Transverse colon (tissue), 4 donors: ENCODE measurements at regions of chr6 and their contacts with region 1.

Region 1: DNA sequence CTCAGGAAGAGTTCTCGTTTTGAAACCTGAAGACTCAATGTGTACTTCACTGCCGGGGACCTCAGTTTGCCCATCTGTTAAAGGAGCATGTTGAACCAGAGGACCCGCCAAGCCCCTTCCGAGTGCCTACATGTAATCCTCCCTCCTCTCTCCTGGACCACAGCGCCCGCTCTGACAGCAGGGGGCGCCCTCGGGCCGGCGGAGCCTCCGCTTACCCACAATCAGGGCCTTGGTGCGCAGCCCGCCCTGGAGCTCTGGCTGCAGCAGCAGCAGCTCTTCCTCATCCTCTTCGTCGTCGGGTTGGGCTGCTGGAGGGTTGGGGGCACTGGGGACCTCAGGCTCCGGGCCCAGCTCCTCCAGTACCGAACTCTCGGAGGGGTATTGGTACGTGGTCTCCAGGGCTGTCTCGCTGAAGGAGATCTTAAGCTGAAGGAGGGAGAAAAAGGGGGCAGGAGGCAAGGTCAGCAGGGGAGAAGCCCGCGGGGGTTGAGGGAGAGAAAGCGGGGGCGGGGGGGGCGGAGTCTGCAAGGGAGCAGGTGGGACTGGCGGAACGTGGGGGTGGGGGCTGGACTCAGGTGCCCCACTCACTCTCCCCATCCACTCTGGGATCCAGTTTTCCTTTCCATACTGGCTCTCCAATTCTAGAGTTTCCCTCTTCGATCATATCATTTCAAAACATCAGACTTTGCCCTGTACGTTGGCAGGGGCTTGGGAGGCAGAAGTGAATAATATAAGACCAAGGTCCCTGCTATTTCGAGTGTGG is 6.3 kb upstream of the DHX16 start:
- DNase-seq: peak; percentile 91
- H3K4me3 ChIP-seq: peak overlapping the region in 1 of 4 donors; percentile 72
- H3K27ac ChIP-seq: peak overlapping the region; percentile 93 to 99 (median 96)
- H3K4me1 ChIP-seq: peaks cover 0 to 54% (median 32%) of the 10 kb centered on the region in 4 donors
- H3K27me3 ChIP-seq: no peaks in the 10 kb centered on the region
- CTCF ChIP-seq: peak; percentile 96 to 99 (median 96)
- EP300 ChIP-seq: no peak
- POLR2A ChIP-seq: no peak

Region 2: DNA sequence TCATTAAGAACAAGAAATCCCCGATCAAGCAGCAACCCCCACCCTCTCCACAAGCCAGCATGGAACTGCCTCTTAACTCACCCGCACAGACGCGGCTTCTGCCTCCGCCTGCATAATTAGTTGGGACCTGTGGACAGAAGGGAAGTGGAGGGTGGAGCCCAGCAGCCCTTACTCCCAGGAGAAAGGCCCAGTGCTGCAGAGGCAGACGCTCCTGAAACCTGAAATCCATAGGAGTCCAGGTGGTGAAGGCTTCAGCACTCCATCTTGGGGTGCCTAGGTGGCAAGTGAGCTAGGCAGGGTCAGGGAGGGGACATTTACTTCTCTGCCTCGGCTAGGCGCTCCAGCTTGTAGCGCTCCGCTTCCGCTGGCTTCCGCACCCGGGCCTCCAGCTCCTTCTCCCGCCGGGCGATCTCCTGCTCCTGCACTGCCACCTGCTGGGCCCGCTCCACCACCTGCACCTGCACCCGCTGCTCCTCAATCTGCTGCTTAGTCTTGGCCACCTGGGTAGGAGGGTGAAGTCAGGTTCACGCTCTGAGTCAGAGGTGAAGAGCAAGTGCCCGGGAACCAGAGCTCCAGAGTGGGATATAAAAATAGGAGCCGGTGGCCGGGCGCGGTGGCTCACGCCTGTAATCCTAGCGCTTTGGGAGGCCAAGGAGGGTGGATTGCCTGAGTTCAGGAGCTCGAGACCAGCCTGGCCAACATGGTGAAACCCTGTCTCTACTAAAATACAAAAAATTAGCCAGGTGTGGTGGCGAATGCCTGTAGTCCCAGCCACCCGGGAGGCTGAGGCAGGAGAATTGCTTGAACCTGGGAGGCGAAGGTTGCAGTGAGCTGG is 51.7 kb after region 1 on chr6:
- in situ Hi-C with region 1: loop called in 2 of 4 experiments (anchors 5 kb)
- intact Hi-C with region 1: no loop called
- DNase-seq: peak; percentile 92
- H3K4me3 ChIP-seq: peak overlapping the region in 1 of 4 donors; percentile 29
- H3K27ac ChIP-seq: peak overlapping the region; percentile 52 to 73 (median 71)
- H3K4me1 ChIP-seq: peaks cover 7 to 22% (median 9%) of the 10 kb centered on the region in 4 donors
- H3K27me3 ChIP-seq: no peaks in the 10 kb centered on the region
- CTCF ChIP-seq: peak; percentile 60 to 86 (median 69)
- EP300 ChIP-seq: no peak
- POLR2A ChIP-seq: no peak

Region 3: GRCh38 chr6:30814136-30815040 is 135.2 kb after region 1 on chr6:
- in situ Hi-C with region 1: no loop called
- intact Hi-C with region 1: loop called (anchors 5 kb)
- DNase-seq: peak; percentile 26
- H3K4me3 ChIP-seq: no peak overlapping the region
- H3K27ac ChIP-seq: peak overlapping the region; percentile 64 to 80 (median 76)
- H3K4me1 ChIP-seq: peaks cover 0 to 55% (median 23%) of the 10 kb centered on the region in 4 donors
- H3K27me3 ChIP-seq: no peaks in the 10 kb centered on the region
- CTCF ChIP-seq: no peak
- EP300 ChIP-seq: no peak
- POLR2A ChIP-seq: no peak

Region 4: DNA sequence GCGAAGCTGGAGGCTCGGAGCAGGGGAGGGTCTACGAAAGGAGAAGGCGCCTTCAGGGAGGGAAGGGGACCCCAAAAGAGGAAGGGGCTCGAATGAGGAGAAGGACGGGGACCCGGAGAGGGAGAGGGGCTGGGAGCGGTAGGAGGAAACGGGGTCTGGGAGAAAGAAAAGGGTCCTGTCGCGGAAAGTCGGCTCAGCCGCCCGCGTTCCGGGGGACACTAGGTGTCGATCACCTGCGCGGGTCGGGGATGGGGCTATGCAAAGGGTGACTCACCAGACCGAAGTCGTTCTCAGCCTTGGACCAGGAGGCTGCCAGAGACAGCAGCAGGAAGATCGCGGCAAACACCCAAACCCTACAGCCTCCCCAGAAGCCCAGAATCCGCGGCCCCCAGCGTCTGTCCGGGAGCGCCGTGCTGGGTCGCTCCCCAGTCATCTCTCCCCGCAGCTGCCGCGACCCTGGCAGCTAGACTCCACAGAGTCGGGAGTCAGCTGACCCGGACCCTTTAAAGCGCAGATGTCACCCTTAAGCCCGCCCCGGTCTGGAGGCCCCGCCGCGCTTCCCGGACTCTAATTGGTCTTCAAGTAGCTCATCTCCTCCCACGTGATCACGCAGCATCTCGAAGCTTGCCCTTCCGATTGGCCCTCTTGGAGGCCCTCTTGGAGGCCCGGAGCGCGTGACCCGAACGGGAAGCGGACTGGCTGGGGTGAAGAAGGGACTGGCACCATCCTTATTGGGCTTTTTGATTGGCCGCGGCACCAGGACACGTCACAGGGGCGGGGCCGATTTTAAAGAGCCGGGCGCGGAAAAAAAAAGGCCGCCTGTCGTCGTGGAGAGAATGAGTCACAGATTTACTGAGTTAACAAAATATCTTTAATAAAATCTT is 1183.4 kb after region 1 on chr6 and contains the start of gene NEU1:
- in situ Hi-C with region 1: no loop called
- intact Hi-C with region 1: loop called (anchors 5 kb)
- DNase-seq: peak; percentile 99
- H3K4me3 ChIP-seq: peak within 1 kb of the TSS; percentile 56 to 88 (median 66)
- H3K27ac ChIP-seq: peak within 1 kb of the TSS; percentile 84 to 94 (median 88)
- H3K4me1 ChIP-seq: peaks cover 7 to 22% (median 10%) of the 10 kb centered on the region in 4 donors
- H3K27me3 ChIP-seq: no peaks in the 10 kb centered on the region
- CTCF ChIP-seq: no peak
- EP300 ChIP-seq: no peak
- POLR2A ChIP-seq: peak; percentile 96
- total RNA-seq, gene NEU1: 21.1 to 88.7 (median 65.4) TPM